ENCODE measurements at regions of chr1 and their contacts with region 1.

Region 1: DNA sequence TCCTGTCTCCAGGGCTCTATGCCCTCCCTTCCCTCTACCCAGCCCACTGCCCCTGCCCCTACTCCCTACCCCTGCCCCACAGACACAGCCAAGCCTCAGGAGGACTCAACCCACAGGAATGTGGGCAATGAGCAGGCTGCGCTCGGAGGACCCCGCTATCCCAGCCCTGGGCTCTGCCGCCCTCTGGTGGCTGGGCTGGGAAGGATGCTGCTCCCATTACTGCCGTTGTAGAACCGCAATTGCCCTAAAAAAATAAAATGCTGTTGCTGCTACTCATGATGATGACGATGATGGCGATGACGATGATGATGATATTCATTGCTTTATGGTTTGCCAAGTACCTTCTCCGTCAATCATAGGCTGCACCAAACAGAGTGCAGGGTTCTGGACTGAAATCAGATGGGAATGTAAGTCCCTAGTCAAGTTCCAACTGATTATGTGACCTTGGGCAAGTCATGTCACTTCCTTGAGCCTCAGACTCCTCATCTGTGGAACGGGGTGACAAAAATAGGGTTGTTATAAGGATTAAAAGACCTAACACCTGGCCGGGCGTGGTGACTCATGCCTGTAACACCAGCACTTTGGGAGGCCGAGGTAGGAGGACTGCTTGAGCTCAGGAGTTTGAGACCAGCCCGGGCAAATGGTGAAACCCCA is 24.6 kb downstream of the ARHGEF19 start:
- DNase-seq: peak; percentile 72 to 84
- H3K4me3 ChIP-seq: no peak overlapping the region
- H3K27ac ChIP-seq: peak overlapping the region; percentile 88
- H3K4me1 ChIP-seq: peaks cover 64% of the 10 kb centered on the region
- H3K27me3 ChIP-seq: no peaks in the 10 kb centered on the region
- CTCF ChIP-seq: peak; percentile 93

Region 2: DNA sequence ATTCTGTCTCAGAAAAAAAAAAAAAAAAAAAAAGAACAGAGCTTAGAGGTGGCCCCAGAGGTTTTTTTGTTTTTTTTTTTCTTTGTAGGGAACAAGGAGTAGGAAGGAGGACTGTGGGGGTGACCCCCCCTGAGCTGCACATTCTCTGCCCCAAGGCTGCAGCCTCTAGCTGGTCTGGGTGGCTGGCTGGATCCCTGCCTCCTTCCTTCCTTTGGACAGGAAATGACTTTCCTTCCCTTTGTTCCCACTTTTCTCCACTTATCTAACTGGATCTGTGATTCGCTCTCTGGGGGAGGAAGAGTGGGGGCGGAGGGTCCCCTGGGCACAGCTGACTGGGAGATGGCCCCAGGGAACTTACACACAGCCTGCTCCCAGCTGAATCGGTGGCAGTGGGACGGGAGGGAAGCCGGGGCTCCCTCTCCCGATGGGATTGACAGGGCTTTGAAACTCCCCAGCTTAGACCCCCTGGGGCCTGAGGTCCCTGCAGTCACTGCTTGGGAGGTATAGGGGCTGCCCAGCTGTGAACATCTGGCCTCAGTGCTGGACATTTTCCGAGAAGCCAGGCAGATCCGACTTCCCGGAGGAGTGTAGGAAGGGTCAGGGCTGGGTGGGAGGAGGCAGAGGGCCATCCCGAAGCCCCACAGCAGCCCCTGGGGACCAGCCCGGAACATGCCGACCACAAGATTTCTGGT is 427.2 kb before region 1 on chr1:
- CTCF ChIA-PET with region 1: no interaction called
- POLR2A ChIA-PET with region 1: no interaction called
- intact Hi-C with region 1: no loop called
- DNase-seq: peak in 1 of 2 experiments; percentile 41
- H3K4me3 ChIP-seq: peak overlapping the region; percentile 72; the same call in 1 of the 2 replicates
- H3K27ac ChIP-seq: peak overlapping the region; percentile 34; the same call in 1 of the 2 replicates
- H3K4me1 ChIP-seq: peaks cover 17% of the 10 kb centered on the region
- H3K27me3 ChIP-seq: no peaks in the 10 kb centered on the region
- CTCF ChIP-seq: no peak

Region 3: DNA sequence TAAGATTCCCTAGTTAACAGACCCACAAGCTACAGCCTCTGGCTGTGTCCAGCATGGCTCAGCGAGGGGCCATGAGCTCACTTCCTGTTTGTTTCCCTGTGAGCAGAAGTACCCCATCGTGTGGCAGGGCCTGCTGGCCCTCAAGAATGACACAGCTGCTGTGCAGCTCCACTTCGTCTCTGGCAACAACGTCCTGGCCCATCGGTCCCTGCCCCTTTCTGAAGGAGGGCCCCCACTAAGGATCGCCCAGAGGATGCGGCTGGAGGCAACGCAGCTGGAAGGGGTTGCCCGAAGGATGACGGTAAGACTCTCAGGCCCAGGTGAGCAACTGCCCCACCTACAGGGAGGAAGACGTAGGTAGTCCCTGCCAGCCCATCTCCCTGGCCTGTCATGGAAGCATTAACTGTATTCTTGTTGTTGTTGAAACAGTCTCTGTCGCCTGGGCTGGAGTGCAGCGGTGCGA is 250.1 kb before region 1 on chr1:
- CTCF ChIA-PET with region 1: no interaction called
- POLR2A ChIA-PET with region 1: no interaction called
- intact Hi-C with region 1: no loop called
- DNase-seq: no peak
- H3K4me3 ChIP-seq: no peak overlapping the region
- H3K27ac ChIP-seq: no peak overlapping the region
- H3K4me1 ChIP-seq: no peaks in the 10 kb centered on the region
- H3K27me3 ChIP-seq: no peaks in the 10 kb centered on the region
- CTCF ChIP-seq: no peak

Region 4: GRCh38 chr1:16078925-16079656 is 108.8 kb before region 1 on chr1:
- CTCF ChIA-PET with region 1: interaction called, 8 read pairs
- POLR2A ChIA-PET with region 1: interaction called, 3 read pairs
- intact Hi-C with region 1: loop called (anchors 1 kb)
- DNase-seq: peak; percentile 67 to 82
- H3K4me3 ChIP-seq: no peak overlapping the region
- H3K27ac ChIP-seq: peak overlapping the region; percentile 20; the same call in 1 of the 2 replicates
- H3K4me1 ChIP-seq: peaks cover 63% of the 10 kb centered on the region
- H3K27me3 ChIP-seq: no peaks in the 10 kb centered on the region
- CTCF ChIP-seq: peak; percentile 92

Region 5: DNA sequence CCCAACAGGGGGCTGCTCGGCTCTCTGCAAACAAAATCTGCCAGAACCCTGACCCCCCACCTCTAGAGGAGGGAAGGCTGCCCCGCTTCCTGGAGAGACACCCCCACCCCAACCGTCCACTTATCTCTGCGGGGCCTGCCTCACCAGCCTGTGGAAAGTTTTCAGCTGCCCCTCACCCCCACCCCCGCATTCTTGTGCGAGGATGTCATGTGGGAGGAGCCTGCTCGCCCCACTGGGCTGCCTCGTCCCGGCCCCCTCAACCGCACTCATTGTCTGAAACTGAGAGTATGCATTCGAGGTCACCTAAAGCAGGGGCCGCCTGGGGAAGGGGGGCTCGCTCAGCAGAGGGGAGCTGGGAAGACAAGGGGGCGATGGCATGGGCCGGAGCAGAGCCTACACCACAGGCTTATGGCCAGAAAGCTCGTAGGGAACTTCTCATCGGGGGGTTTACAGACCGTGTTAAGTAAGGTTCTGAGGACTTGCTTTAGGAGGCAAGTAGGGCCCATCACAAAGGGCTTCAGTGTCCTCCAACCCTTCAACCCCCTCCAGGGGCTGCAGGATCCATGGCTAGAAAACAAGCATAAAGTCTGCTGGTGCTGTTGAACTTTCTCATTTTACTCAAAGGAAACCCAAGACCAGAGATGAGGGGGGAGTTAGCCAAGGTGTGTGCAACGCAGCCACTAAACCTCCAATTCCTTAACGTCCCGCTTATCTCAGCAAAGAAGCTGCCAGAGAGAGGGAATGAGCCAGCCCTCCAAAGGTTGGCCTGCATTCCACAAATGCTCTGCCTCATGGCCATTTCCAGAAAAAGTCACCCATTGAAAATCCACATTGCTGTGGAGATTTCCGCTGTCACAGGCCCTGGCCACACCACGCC is 41.4 kb before region 1 on chr1:
- CTCF ChIA-PET with region 1: interaction called, 5 read pairs
- POLR2A ChIA-PET with region 1: interaction called, 9 read pairs
- intact Hi-C with region 1: loop called (anchors 1 kb)
- DNase-seq: peak; percentile 75 to 90
- H3K4me3 ChIP-seq: peak overlapping the region; percentile 86
- H3K27ac ChIP-seq: peak overlapping the region; percentile 92
- H3K4me1 ChIP-seq: peaks cover 94% of the 10 kb centered on the region
- H3K27me3 ChIP-seq: no peaks in the 10 kb centered on the region
- CTCF ChIP-seq: no peak

Region 6: DNA sequence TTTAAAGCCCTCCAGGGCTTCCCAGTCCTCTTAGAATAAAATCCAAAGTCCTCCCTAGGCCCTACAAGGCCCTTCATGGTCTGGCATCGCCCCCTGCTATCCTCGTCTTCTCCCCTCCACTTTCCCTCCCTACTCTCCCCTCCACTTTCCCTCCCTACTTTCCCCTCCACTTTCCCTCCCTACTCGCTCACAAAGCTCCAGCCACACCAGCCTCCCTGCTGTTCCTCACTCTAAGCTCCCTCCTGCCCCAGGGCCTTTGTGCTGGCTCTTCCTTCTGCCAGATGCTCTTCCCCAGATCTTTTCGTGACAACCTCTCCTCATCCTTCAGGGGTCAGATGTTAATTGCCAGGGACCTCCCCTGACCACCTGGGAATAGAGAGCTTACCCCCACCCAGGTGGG is 11.8 kb after region 1 on chr1:
- CTCF ChIA-PET with region 1: no interaction called
- POLR2A ChIA-PET with region 1: interaction called, 27 read pairs
- intact Hi-C with region 1: no loop called
- DNase-seq: no peak
- H3K4me3 ChIP-seq: no peak overlapping the region
- H3K27ac ChIP-seq: no peak overlapping the region
- H3K4me1 ChIP-seq: no peaks in the 10 kb centered on the region
- H3K27me3 ChIP-seq: no peaks in the 10 kb centered on the region
- CTCF ChIP-seq: no peak

Region 7: GRCh38 chr1:16236511-16237342 is 48.9 kb after region 1 on chr1 and contains the start of gene CPLANE2:
- CTCF ChIA-PET with region 1: no interaction called
- POLR2A ChIA-PET with region 1: interaction called, 3 read pairs
- intact Hi-C with region 1: loop called (anchors 2 kb)
- DNase-seq: peak; percentile 65 to 93
- H3K4me3 ChIP-seq: peak within 1 kb of the TSS; percentile 81
- H3K27ac ChIP-seq: peak within 1 kb of the TSS; percentile 60
- H3K4me1 ChIP-seq: peaks cover 13% of the 10 kb centered on the region
- H3K27me3 ChIP-seq: no peaks in the 10 kb centered on the region
- CTCF ChIP-seq: 0 out of 2 replicates have a peak, but pooled peaks have one; percentile 29
- total RNA-seq, gene CPLANE2: 4.5 and 6.1 TPM in 2 replicates

Region 8: DNA sequence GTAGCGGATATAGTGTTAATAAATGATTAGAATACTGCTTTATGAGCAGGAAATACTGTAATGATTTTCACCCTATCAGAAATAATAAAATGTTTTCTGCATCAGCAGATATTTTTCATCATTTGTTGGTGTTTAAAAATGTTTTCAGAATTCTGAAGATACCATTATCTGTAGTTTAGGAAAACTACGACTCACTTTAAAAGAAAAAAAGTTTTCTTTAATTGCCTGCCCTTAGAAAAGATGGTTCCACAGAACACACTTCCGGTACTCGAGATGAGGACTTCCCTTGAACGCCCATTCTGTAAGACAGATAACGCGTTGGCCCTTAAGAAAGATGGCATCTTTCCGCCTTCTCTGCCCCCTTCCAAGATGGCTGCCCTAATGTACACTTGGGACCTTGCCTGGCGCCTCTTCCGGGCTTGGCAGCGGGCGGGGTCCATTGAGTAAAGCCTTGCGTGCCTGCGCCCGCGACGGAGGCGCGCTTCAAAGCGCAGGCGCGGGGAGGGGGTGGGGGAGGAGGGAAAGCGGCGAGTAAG is 178.9 kb after region 1 on chr1 and contains the start of gene SZRD1:
- CTCF ChIA-PET with region 1: interaction called, 4 read pairs
- POLR2A ChIA-PET with region 1: interaction called, 3 read pairs
- intact Hi-C with region 1: loop called (anchors 2 kb)
- DNase-seq: peak; percentile 92
- H3K4me3 ChIP-seq: peak within 1 kb of the TSS; percentile 59
- H3K27ac ChIP-seq: peak within 1 kb of the TSS; percentile 74
- H3K4me1 ChIP-seq: 0 out of 2 replicates have a peak, but pooled peaks cover 7% of the 10 kb centered on the region
- H3K27me3 ChIP-seq: no peaks in the 10 kb centered on the region
- CTCF ChIP-seq: no peak
- total RNA-seq, gene SZRD1: 104 and 114 TPM in 2 replicates